Natural killer cell (primary cell): ENCODE measurements at regions of chr19 and their contacts with region 1.

Region 1: DNA sequence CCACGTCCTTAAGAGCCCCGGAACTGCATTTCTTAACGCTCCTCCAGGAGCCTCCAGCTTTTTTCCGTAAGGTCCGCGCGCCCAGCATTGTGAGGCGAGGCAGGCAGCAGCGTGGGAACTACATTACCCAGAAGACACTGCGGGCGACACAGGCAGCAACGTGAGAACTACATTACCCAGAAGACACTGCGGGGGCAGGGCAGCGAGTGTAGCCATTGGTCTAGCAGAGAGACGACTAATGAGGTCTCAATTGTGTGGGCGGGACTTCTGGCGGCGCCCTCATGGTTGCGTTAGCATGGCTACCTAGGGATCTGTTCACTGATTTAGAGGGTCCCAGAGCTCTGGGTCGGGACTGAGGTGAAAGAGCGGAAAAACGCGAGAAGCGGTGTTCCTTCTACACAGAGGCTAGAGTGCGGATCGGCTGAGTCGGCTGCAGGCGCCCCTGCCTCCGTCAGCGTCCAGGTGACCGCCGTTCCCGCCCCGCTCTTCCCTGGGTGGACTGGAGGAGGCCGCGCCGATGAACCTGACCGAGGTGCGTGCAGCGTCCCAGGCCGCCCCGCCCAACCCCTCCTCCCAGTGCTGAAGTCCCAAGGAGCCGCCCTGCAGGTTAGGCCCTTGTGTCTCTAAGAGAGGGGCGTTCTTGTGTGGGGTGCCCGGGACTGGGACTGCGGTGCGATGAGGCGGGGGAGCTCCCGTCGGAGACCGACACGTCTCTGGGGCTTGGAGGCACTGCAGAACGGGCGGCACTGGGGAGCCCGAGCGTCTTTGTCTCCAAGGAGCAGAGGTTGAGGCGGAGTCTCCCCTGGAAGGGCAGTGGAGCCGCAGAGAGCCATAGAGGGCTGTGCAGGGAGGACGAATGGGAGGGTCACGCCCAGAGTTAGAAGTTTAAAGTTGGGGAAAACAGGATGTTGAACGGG is at the start of gene ZNF749:
- DNase-seq: peak; percentile 92 to 99
- ATAC-seq: peak; percentile 99 to 100 (median 100)
- H3K4me3 ChIP-seq: peak within 1 kb of the TSS; percentile 62
- H3K4me3 Mint-ChIP-seq: peak within 1 kb of the TSS; percentile 99
- H3K27ac ChIP-seq: peak within 1 kb of the TSS; percentile 70
- H3K27ac Mint-ChIP-seq: peak within 1 kb of the TSS; percentile 87 to 88
- H3K4me1 ChIP-seq: peaks cover 14% of the 10 kb centered on the region
- H3K4me1 Mint-ChIP-seq: peaks cover 21 to 41% of the 10 kb centered on the region in 2 donors
- H3K27me3 ChIP-seq: no peaks in the 10 kb centered on the region
- H3K27me3 Mint-ChIP-seq: peaks cover 0 to 2% of the 10 kb centered on the region in 2 donors
- CTCF ChIP-seq: no peak
- total RNA-seq, gene ZNF749: 7.0 to 9.8 (median 7.8) TPM

Region 2: GRCh38 chr19:57245959-57246358 is 189.4 kb before region 1 on chr19:
- intact Hi-C with region 1: no loop called
- DNase-seq: no peak
- ATAC-seq: no peak
- H3K4me3 ChIP-seq: no peak overlapping the region
- H3K4me3 Mint-ChIP-seq: no peak overlapping the region
- H3K27ac ChIP-seq: no peak overlapping the region
- H3K27ac Mint-ChIP-seq: no peak overlapping the region
- H3K4me1 ChIP-seq: peaks cover 14% of the 10 kb centered on the region
- H3K4me1 Mint-ChIP-seq: peaks cover 23 to 30% of the 10 kb centered on the region in 2 donors
- H3K27me3 ChIP-seq: no peaks in the 10 kb centered on the region
- H3K27me3 Mint-ChIP-seq: no peaks in the 10 kb centered on the region
- CTCF ChIP-seq: no peak

Region 3: DNA sequence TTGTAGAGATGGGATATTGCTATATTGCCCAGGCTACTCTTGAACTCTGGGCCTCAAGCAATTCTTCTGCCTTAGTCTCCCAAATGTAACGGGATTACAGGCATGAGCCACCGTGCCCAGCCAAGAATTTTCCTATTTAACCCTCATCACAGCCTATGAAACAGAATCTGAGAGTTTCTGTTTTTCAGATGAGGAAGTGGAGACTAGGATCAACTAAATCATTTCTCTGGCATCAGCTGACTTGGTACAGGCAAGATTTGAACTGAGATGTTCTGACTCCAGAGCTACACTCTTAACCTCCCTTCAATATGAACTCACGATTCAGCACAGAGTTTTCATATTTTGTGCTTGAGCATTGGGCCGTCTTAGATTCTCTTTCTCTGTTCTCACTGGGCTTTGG is 146.9 kb before region 1 on chr19:
- intact Hi-C with region 1: no loop called
- DNase-seq: no peak
- ATAC-seq: no peak
- H3K4me3 ChIP-seq: no peak overlapping the region
- H3K4me3 Mint-ChIP-seq: no peak overlapping the region
- H3K27ac ChIP-seq: no peak overlapping the region
- H3K27ac Mint-ChIP-seq: peak overlapping the region in 1 of 2 donors; percentile 49
- H3K4me1 ChIP-seq: no peaks in the 10 kb centered on the region
- H3K4me1 Mint-ChIP-seq: peaks cover 26 to 29% of the 10 kb centered on the region in 2 donors
- H3K27me3 ChIP-seq: no peaks in the 10 kb centered on the region
- H3K27me3 Mint-ChIP-seq: no peaks in the 10 kb centered on the region
- CTCF ChIP-seq: no peak

Region 4: GRCh38 chr19:57389730-57390598 is 45.4 kb before region 1 on chr19 and contains the start of gene ZNF548:
- intact Hi-C with region 1: loop called (anchors 1 kb)
- DNase-seq: peak; percentile 99
- ATAC-seq: peak; percentile 90 to 98 (median 92)
- H3K4me3 ChIP-seq: peak within 1 kb of the TSS; percentile 81
- H3K4me3 Mint-ChIP-seq: peak within 1 kb of the TSS; percentile 94
- H3K27ac ChIP-seq: peak within 1 kb of the TSS; percentile 95
- H3K27ac Mint-ChIP-seq: peak within 1 kb of the TSS; percentile 97 to 98
- H3K4me1 ChIP-seq: peaks cover 23% of the 10 kb centered on the region
- H3K4me1 Mint-ChIP-seq: peaks cover 37 to 48% of the 10 kb centered on the region in 2 donors
- H3K27me3 ChIP-seq: no peaks in the 10 kb centered on the region
- H3K27me3 Mint-ChIP-seq: peaks cover 0 to 4% of the 10 kb centered on the region in 2 donors
- CTCF ChIP-seq: no peak
- total RNA-seq, gene ZNF548: 75.5 to 104 (median 96.9) TPM

Region 5: DNA sequence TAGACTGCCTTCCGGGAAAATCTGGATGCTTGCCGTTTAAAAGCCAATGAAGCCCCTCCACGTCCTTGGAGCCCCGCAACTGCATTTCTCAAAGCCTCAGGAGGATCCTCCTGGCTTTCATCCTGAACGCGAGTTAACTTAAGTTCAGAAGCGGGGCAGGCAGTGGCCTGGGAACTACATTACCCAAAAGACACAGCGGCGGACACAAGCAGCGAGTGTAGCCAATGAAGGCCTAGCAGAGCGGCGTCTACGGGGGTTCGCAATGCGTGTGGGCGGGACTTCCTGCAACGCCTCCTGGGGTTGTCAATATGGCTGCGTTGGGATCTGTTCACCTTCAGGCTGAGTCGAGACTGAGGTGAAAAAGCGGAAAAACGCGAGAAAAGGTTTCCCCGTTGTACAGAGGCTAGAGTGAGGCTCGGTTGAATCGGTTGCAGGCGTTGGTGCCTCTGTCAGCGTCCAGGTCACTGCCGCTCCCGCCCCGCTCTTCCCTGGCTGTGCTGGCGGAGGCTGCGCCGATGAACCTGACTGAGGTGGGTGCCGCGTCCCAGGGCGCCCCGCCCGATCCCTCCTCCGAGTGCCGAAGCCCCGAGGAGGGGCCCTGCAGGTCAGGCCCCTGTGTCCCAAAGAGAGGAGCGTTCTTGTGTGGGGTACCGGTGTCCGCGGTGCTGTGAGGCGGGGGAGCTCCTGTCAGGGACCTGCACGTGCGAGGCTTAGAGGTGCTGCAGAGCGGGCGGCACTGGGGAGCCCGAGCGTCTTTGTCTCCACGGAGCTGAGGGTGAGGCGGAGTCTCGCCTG is 24.2 kb before region 1 on chr19 and contains the start of gene ZNF17:
- intact Hi-C with region 1: loop called (anchors 1 kb)
- DNase-seq: peak; percentile 84 to 96
- ATAC-seq: peak; percentile 99 to 100 (median 100)
- H3K4me3 ChIP-seq: peak within 1 kb of the TSS; percentile 86
- H3K4me3 Mint-ChIP-seq: peak within 1 kb of the TSS; percentile 94
- H3K27ac ChIP-seq: peak within 1 kb of the TSS; percentile 62
- H3K27ac Mint-ChIP-seq: peak within 1 kb of the TSS; percentile 84
- H3K4me1 ChIP-seq: peaks cover 18% of the 10 kb centered on the region
- H3K4me1 Mint-ChIP-seq: peaks cover 29 to 37% of the 10 kb centered on the region in 2 donors
- H3K27me3 ChIP-seq: no peaks in the 10 kb centered on the region
- H3K27me3 Mint-ChIP-seq: no peaks in the 10 kb centered on the region
- CTCF ChIP-seq: no peak
- total RNA-seq, gene ZNF17: 13.0 to 15.0 (median 13.3) TPM

Region 6: GRCh38 chr19:57477191-57478008 is 42.1 kb after region 1 on chr19 and contains the start of gene ZNF772:
- intact Hi-C with region 1: no loop called
- DNase-seq: peak; percentile 77 to 95
- ATAC-seq: peak; percentile 97 to 100 (median 100)
- H3K4me3 ChIP-seq: peak within 1 kb of the TSS; percentile 63
- H3K4me3 Mint-ChIP-seq: peak within 1 kb of the TSS; percentile 96
- H3K27ac ChIP-seq: peak within 1 kb of the TSS; percentile 75
- H3K27ac Mint-ChIP-seq: peak within 1 kb of the TSS; percentile 94 to 97
- H3K4me1 ChIP-seq: peaks cover 15% of the 10 kb centered on the region
- H3K4me1 Mint-ChIP-seq: peaks cover 18 to 24% of the 10 kb centered on the region in 2 donors
- H3K27me3 ChIP-seq: no peaks in the 10 kb centered on the region
- H3K27me3 Mint-ChIP-seq: peaks cover 8 to 14% of the 10 kb centered on the region in 2 donors
- CTCF ChIP-seq: peak; percentile 50
- total RNA-seq, gene ZNF772: 1.3 to 3.5 (median 1.4) TPM

Region 7: GRCh38 chr19:57559404-57560025 is 124.2 kb after region 1 on chr19 and contains the start of gene ZNF550:
- intact Hi-C with region 1: loop called (anchors 1 kb)
- DNase-seq: peak; percentile 84 to 90
- ATAC-seq: peak; percentile 94 to 99 (median 98)
- H3K4me3 ChIP-seq: peak within 1 kb of the TSS; percentile 93
- H3K4me3 Mint-ChIP-seq: peak within 1 kb of the TSS; percentile 98
- H3K27ac ChIP-seq: peak within 1 kb of the TSS; percentile 65
- H3K27ac Mint-ChIP-seq: peak within 1 kb of the TSS; percentile 87 to 94
- H3K4me1 ChIP-seq: peaks cover 19% of the 10 kb centered on the region
- H3K4me1 Mint-ChIP-seq: peaks cover 33 to 34% of the 10 kb centered on the region in 2 donors
- H3K27me3 ChIP-seq: no peaks in the 10 kb centered on the region
- H3K27me3 Mint-ChIP-seq: peaks cover 0 to 8% of the 10 kb centered on the region in 2 donors
- CTCF ChIP-seq: no peak
- total RNA-seq, gene ZNF550: 11.2 to 12.5 (median 12.1) TPM